BJ (cell line): ENCODE measurements at regions of chr12 and their contacts with region 1.

Region 1: GRCh38 chr12:442235-442884 is 17.4 kb upstream of the B4GALNT3 start:
- DNase-seq: no peak
- H3K4me3 ChIP-seq: no peak overlapping the region
- H3K27me3 ChIP-seq: no peaks in the 10 kb centered on the region
- CTCF ChIP-seq: peak; percentile 82

Region 2: GRCh38 chr12:219891-220352 is 222.4 kb before region 1 on chr12:
- CTCF ChIA-PET with region 1: no interaction called
- POLR2A ChIA-PET with region 1: no interaction called
- DNase-seq: no peak
- H3K4me3 ChIP-seq: no peak overlapping the region
- H3K27me3 ChIP-seq: peaks cover 8% of the 10 kb centered on the region
- CTCF ChIP-seq: peak; percentile 53

Region 3: GRCh38 chr12:452667-453210 is 10.4 kb after region 1 on chr12:
- CTCF ChIA-PET with region 1: interaction called, 15 read pairs
- POLR2A ChIA-PET with region 1: no interaction called
- DNase-seq: no peak
- H3K4me3 ChIP-seq: no peak overlapping the region
- H3K27me3 ChIP-seq: peaks cover 10% of the 10 kb centered on the region
- CTCF ChIP-seq: peak; percentile 30; the same call in 1 of the 2 replicates

Region 4: DNA sequence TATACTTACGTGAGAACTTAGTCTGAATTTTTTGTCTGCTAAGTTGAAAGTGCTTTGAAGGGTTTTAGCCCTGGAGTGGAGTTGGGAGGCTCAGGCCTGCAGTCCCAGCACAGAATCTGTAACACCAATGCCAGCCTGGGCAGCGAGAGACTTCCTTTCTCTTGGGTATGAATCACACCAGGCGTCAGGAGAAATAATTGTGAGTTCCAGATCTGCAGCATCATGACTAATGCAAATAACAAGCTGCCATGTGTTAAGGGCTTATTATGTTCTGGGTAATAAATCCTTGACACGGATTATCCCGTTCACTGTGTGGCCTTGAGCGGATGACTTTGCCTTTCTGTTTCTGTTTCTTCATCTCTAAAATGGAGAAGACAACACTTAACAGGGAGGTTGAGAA is 87.9 kb after region 1 on chr12:
- CTCF ChIA-PET with region 1: interaction called, 14 read pairs
- POLR2A ChIA-PET with region 1: no interaction called
- DNase-seq: no peak
- H3K4me3 ChIP-seq: no peak overlapping the region
- H3K27me3 ChIP-seq: peaks cover 5% of the 10 kb centered on the region; the same call in 1 of the 2 replicates
- CTCF ChIP-seq: no peak

Region 5: GRCh38 chr12:538731-539539 is 96.6 kb after region 1 on chr12:
- CTCF ChIA-PET with region 1: interaction called, 77 read pairs
- POLR2A ChIA-PET with region 1: no interaction called
- DNase-seq: no peak
- H3K4me3 ChIP-seq: no peak overlapping the region
- H3K27me3 ChIP-seq: no peaks in the 10 kb centered on the region; the same call in none of the 2 replicates
- CTCF ChIP-seq: no peak

Region 6: DNA sequence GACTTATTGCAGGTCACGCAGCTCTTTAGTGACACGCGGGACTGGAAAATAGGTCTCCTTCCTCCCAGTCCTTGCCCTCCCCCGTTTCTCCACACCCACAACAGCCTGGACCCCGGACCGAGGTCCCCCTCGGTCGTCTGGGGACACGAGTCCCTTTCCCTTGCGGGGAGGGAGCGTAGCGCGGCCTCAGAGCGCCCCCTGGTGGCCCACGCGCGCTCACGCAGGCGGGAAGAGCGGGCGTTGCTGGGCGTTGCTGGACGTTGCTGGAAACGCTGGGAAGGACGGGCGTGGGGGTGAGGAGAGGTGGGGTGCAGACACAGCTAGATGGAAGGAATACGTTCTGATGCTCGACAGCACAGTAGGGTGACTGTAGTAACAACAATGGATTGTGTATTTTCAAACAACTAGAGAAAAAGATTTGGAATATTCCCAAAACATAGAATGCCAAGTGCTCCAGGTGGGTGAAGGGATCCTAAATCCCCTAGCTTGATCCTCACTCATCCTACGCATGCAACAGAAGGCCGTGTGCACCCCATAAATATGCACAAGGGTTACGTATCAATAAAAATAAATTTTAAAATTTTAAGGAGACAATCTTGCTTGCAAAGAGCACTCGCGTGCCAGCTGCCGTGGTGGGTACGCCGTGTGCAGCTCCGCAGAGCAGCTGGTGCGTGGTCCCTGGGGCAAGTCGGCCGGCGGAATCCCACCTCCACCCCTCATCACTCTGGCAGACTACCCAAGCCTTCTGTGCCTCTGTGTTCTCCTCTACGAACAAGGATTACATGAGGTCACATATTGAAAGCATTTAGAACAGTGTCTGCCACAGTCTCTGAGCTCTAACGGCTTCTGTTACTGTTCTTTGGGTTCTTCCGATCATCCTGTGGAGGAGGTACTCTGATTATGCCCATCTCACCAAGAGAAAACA is 104.8 kb after region 1 on chr12:
- CTCF ChIA-PET with region 1: interaction called, 136 read pairs
- POLR2A ChIA-PET with region 1: no interaction called
- DNase-seq: no peak
- H3K4me3 ChIP-seq: peak overlapping the region; percentile 11; the same call in 1 of the 2 replicates
- H3K27me3 ChIP-seq: peaks cover 18% of the 10 kb centered on the region
- CTCF ChIP-seq: peak; percentile 99